ENCODE measurements at regions of chr13 and their contacts with region 1.

Region 1: GRCh38 chr13:31236211-31236786 is 36.5 kb downstream of the B3GLCT start:
- DNase-seq: peak; percentile 9
- ATAC-seq: no peak
- H3K4me3 Mint-ChIP-seq: no peak overlapping the region
- H3K27ac Mint-ChIP-seq: no peak overlapping the region
- H3K4me1 Mint-ChIP-seq: no peaks in the 10 kb centered on the region
- H3K27me3 Mint-ChIP-seq: no peaks in the 10 kb centered on the region

Region 2: GRCh38 chr13:31221057-31221456 is 15.2 kb before region 1 on chr13:
- CTCF ChIA-PET with region 1: interaction called, 12 read pairs
- POLR2A ChIA-PET with region 1: no interaction called
- intact Hi-C with region 1: no loop called
- DNase-seq: no peak
- ATAC-seq: no peak
- H3K4me3 Mint-ChIP-seq: no peak overlapping the region
- H3K27ac Mint-ChIP-seq: no peak overlapping the region
- H3K4me1 Mint-ChIP-seq: no peaks in the 10 kb centered on the region
- H3K27me3 Mint-ChIP-seq: no peaks in the 10 kb centered on the region

Region 3: DNA sequence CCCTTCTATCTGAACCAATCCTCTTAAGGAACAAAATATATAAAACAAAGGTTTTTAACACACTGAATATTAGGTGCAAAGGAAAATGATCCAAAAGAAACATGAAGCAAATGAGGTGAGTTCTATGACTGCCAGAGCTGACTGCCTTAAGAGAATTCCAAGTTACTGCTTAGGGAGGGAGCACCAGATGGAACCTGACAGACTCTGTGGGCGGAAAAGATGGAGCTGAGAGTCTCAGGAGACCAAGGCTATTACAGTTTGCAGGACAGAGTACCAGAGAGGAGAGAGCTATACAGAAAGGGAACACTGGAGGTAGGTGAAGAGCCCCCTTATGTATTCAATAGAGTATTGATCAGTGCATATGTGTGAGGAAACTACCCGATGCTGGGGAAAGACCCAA is 50.6 kb after region 1 on chr13:
- CTCF ChIA-PET with region 1: no interaction called
- POLR2A ChIA-PET with region 1: no interaction called
- intact Hi-C with region 1: no loop called
- DNase-seq: no peak
- ATAC-seq: no peak
- H3K4me3 Mint-ChIP-seq: no peak overlapping the region
- H3K27ac Mint-ChIP-seq: no peak overlapping the region
- H3K4me1 Mint-ChIP-seq: no peaks in the 10 kb centered on the region
- H3K27me3 Mint-ChIP-seq: no peaks in the 10 kb centered on the region

Region 4: GRCh38 chr13:31424117-31424729 is 187.9 kb after region 1 on chr13:
- CTCF ChIA-PET with region 1: interaction called, 43 read pairs
- POLR2A ChIA-PET with region 1: no interaction called
- intact Hi-C with region 1: loop called (anchors 1 kb)
- DNase-seq: peak; percentile 79
- ATAC-seq: peak; percentile 92
- H3K4me3 Mint-ChIP-seq: no peak overlapping the region
- H3K27ac Mint-ChIP-seq: no peak overlapping the region
- H3K4me1 Mint-ChIP-seq: peaks cover 3% of the 10 kb centered on the region
- H3K27me3 Mint-ChIP-seq: peaks cover 17% of the 10 kb centered on the region

Region 5: GRCh38 chr13:31742097-31742734 is 505.9 kb after region 1 on chr13:
- CTCF ChIA-PET with region 1: interaction called, 7 read pairs
- POLR2A ChIA-PET with region 1: no interaction called
- intact Hi-C with region 1: loop called (anchors 1 to 2 kb)
- DNase-seq: peak; percentile 81
- ATAC-seq: peak; percentile 66
- H3K4me3 Mint-ChIP-seq: no peak overlapping the region
- H3K27ac Mint-ChIP-seq: no peak overlapping the region
- H3K4me1 Mint-ChIP-seq: peaks cover 2% of the 10 kb centered on the region
- H3K27me3 Mint-ChIP-seq: peaks cover 4% of the 10 kb centered on the region